Ascending aorta (tissue), 2 donors: ENCODE measurements at regions of chr1 and their contacts with region 1.

Region 1: GRCh38 chr1:31587720-31588394 is 11.5 kb downstream of the TINAGL1 start:
- DNase-seq: peak; percentile 70 to 94
- H3K4me3 ChIP-seq: peak overlapping the region; percentile 46 to 56
- H3K27ac ChIP-seq: peak overlapping the region; percentile 93 to 97
- H3K4me1 ChIP-seq: peaks cover 45 to 77% of the 10 kb centered on the region in 2 donors
- H3K27me3 ChIP-seq: no peaks in the 10 kb centered on the region
- CTCF ChIP-seq: peak; percentile 28 to 69 (median 65)

Region 2: DNA sequence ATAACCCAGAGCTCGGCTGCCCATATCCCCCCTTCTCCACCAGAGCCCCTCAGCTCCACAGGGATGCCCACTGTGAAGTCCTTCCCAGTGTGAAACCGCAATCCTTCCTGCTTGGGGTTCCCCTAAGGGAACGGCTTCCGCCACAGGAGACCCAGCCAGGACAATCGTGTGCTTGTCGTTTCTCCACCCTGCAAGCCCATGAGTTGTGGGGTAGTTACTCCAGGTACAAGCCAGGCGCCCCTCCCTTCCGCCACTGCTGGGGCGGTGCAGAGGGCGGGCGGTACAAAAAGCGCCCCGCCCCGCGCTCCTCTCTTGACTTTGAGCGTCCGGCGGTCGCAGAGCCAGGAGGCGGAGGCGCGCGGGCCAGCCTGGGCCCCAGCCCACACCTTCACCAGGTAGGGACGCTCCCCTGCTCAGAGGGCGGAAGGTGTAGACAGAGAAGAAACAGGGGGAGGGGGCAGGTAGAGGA is 11.6 kb before region 1 on chr1 and contains the start of gene TINAGL1:
- intact Hi-C with region 1: loop called (anchors 2 kb)
- DNase-seq: peak in 1 of 2 donors; percentile 86
- H3K4me3 ChIP-seq: peak within 1 kb of the TSS; percentile 55 to 89
- H3K27ac ChIP-seq: peak within 1 kb of the TSS; percentile 93 to 97
- H3K4me1 ChIP-seq: peaks cover 18 to 41% of the 10 kb centered on the region in 2 donors
- H3K27me3 ChIP-seq: no peaks in the 10 kb centered on the region
- CTCF ChIP-seq: no peak
- total RNA-seq, gene TINAGL1: 1,807 TPM

Region 3: DNA sequence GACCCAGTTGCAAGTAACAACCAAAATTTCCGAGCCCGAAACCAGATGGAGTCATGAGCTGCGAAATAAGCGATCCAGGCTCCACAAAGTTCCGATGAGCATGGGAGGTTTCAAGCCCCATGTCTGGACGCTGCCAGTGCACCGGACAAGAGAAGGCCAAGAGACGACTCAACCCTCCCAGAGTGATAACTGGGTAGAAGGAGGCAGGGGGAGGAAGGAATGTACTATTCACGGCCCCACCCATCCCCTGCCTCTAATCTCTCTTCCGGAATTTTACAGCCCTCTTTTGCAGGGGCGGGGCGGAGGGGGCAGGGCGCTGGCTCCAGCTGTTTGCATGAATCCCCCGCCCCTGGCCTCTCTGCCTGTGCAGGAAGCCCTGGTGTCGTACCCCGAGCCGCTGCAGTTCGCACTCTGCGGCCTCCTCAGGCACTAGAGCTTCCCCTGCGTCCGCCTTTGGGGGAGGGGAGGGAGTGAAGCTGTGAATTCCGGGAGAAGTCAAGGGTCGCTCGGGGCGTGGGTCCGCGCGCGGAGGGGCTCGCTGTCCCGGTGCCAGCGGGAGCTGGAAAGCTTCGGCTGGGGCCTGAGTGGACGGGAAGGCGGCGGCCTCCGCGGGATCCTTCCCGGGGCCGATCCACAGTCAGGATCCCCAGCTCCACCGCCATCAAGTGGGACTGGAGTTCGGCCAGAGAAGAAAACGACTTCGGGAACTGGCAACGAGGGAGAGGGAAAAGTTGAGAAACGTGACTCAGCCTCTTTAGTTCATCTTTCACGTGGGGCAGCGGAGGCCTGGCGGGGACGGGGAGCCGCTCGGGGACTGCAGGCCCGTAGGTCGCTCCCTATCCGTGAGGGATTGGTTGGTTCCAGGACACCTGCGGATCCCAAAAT is 356.6 kb after region 1 on chr1:
- intact Hi-C with region 1: loop called (anchors 10 kb)
- DNase-seq: peak; percentile 66 to 93
- H3K4me3 ChIP-seq: peak overlapping the region; percentile 18 to 59
- H3K27ac ChIP-seq: peak overlapping the region; percentile 93 to 95
- H3K4me1 ChIP-seq: peaks cover 4 to 12% of the 10 kb centered on the region in 2 donors
- H3K27me3 ChIP-seq: no peaks in the 10 kb centered on the region
- CTCF ChIP-seq: no peak